ENCODE measurements at regions of chr1 and their contacts with region 1.

Region 1: DNA sequence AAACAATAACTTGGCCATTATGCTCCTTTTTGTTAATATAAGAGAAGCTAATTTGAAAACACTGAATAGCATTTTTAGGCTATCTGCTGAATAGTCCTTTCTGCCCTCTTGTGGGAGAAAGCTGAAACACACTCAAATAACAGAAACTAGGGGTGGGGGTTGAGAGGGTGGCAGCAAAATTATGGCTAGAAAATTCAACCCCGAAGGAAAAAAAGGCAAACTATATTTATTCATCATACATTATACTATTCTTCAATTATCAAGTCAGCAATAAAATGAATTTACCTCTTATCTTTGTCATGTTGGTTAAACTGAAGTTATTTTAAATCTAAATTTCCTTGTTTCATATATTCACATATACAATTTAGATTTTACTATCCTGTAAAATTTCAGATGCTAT is 255.9 kb downstream of the FAF1 start:
- DNase-seq: no peak

Region 2: DNA sequence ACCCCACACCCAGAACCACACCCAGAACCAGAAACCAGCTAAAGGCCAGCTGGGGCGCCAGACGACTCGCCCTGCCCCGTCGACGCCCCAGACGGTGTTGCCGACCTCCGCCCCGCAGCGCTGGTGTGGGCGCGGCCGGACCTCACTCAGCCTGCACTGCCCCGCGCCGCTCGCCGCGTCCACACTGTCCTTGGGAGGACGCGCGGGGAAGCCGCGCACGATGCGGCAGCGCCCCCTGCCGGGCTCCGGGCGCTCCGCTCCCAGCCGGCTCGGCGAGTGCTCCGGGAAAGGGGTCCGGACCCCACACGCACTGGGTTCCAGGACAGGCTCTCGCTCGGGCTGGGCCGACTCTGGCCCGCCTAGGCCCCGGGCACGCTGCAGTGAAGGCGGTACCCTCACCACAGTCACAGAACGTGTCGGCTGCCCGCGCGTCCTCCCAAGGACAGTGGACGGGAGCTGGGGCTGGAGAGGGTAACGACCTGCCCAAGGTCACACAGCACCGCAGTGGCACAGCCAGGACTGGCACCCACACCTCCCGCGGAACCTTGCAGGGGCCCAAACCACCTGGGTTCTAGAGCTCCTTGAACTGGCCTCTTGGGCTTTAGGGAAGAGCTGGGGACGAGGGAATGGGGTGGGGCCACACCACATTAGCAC is 371.1 kb before region 1 on chr1:
- intact Hi-C with region 1: no loop called
- DNase-seq: peak; percentile 83

Region 3: DNA sequence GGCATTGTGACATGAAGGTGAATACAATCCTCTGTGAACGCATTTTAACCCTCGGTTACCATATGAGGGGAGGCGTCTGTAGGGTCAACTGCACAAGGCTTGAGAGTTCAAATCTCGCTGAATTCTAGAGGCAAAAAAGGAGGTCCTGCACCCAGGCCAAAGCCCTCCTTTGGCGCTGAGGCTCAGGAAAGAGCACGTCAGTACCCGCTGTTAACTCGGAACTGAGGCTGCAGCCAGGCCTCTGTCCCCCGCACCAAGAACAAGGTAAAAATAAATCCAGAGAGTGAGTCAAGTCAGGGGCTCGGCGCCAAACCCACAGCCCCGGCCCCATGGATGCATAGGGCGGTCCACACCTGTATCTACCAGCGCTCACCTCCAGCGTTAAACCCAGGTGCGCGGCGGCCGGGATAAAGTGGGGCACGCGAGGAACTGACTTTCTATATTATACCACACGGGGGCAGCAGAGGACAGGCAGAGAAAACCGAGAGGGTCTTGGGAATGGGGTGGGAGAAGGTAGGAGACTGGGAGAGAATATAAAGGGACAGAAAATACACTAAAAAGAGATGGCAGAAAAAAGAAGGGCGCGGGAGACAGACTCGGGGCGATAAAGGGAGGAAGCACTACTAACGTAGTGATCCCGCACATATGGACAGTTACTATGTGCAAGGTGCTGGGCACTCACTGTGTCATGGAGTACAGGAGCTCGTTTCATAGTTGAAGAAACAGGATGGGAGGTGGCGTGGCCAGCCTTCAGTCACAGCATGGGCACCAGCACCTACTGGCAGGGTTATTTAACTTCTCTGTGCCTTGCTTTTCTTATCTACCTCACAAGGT is 335.7 kb before region 1 on chr1:
- intact Hi-C with region 1: loop called (anchors 10 kb)
- DNase-seq: no peak

Region 4: DNA sequence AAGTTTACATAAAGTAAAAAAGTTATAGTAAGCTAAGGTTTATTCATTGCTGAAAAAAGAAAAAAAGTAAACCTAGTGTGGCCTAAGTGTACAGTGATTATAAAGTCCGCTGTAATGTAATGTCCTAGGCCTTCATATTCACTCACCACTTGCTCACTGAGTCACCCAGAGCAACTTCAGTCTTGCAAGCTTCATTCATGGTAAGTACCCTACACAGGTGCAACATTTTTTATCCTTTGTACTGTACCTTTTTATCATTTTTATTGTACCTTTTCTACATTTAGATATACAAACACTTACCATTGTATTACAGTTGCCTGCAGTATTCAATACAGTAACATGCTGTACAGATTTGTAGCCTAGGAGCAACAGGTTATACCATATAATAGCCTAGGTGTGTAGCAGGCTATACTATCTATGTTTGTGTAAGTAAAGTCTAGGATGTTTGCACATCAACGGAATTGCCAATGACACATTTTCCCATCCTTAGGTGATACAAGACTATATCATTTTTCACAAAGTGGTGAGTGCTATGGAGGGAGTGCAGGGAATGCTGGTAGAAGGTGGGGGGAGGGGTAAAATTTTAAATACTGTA is 222.9 kb before region 1 on chr1:
- intact Hi-C with region 1: no loop called
- DNase-seq: no peak

Region 5: DNA sequence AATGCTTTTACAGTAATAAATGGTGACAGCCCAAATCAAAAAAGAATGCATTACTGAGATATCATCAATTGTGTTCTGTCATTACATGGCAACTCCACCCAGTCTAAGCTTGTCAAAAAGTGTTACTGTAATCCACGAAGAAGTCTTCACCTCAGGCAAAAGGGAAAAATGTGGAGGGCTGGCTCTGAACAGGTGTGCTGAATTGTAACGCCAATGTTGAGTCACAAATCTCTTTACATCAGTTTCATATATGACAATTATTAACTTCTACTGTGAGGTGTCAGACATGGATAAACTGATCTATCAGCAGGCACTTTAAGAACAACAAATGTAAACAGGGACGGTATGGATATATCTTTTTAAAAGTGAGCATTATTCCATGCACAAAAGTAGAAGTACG is 182.4 kb before region 1 on chr1:
- intact Hi-C with region 1: no loop called
- DNase-seq: no peak

Measured in cardiac septum (tissue), 1 donor.